ENCODE measurements at regions of chr5 and their contacts with region 1.

Region 1: DNA sequence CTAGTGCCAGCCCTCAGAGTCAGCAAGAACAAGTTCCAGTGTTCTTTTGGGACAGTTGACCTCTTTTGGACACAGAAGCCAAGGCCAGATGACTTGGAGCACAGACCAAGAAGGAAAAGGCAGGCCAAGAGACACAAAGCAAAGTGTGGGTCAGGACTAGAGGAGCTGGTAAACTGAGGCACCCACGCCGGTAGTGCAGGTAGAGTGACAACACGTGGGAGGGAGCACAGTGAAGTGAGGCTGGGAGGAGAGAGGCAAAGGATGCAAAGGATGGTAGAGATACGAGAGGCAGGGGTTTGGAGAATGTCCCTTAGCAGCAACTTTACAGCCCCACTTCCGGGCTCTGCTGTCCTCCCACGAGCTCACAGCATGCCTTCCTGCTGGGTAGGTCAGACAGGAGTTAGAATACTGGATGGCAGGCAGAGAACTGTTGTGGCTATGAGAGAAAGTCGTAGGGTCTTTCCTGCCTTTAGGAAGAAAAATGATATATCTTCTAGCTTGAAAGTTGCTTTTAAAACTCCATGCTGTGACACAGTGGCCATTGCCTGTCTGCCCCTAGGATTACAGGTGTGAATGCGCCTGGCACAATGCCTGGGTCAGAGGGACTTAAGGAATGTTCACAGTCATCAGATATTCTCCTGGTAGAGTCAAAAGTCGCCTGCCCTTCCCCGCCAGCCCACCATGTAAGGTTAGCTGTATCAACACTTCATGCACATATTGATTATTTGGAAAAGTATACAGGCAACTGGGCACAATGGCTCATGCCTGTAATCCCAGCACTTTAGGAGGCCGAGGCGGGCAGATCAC is 97.9 kb downstream of the PDE8B start:
- DNase-seq: no peak
- H3K4me3 ChIP-seq: no peak overlapping the region
- H3K27ac ChIP-seq: no peak overlapping the region
- H3K4me1 ChIP-seq: no peaks in the 10 kb centered on the region
- H3K27me3 ChIP-seq: no peaks in the 10 kb centered on the region
- CTCF ChIP-seq: no peak
- POLR2A ChIP-seq: no peak

Region 2: DNA sequence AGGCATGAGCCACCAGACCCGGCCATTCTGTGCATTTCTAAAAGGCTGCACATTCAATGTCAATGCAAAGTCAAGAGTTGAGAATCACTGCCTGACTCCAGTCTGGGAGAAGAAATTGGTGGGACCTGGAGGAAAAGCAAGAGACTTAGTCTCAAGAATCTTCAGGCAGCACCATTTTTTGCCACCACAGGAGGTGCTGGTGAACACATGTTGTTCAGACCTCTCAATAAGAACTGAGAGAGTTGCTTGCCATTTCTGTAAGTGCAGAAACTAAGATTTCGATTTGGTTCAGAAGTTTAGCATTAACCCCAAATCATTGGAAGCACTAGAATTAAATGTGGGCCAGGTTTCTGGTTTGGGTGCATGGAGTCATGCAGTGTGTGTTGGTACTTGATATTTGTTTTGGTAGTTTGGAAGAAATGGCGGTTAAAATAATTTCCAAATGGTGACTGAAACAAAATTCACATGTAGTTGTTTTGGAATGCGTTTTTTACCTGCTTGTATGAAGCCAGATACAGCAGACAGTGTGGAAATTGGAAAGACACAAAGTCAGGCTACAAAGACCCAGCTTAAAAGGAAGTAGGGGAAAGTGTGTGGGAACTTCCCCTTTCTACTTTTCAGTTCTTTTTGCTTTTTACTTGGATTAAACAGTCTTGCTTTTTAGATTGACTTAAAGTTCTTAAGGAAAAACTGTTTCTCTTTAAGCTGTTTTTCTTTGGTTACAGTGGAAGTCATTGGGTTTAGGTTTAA is 77.5 kb before region 1 on chr5:
- CTCF ChIA-PET with region 1: no interaction called
- POLR2A ChIA-PET with region 1: no interaction called
- dilution Hi-C with region 1: no loop called
- intact Hi-C with region 1: no loop called
- DNase-seq: no peak
- H3K4me3 ChIP-seq: no peak overlapping the region
- H3K27ac ChIP-seq: no peak overlapping the region
- H3K4me1 ChIP-seq: no peaks in the 10 kb centered on the region
- H3K27me3 ChIP-seq: peaks cover 5 to 12% of the 10 kb centered on the region in 2 experiments
- CTCF ChIP-seq: no peak
- POLR2A ChIP-seq: no peak

Region 3: GRCh38 chr5:77379558-77380061 is 71.3 kb after region 1 on chr5:
- CTCF ChIA-PET with region 1: no interaction called
- POLR2A ChIA-PET with region 1: interaction called, 14 read pairs
- dilution Hi-C with region 1: no loop called
- intact Hi-C with region 1: no loop called
- DNase-seq: no peak
- H3K4me3 ChIP-seq: no peak overlapping the region
- H3K27ac ChIP-seq: no peak overlapping the region
- H3K4me1 ChIP-seq: no peaks in the 10 kb centered on the region
- H3K27me3 ChIP-seq: peaks cover 0 to 2% of the 10 kb centered on the region in 2 experiments
- CTCF ChIP-seq: no peak
- POLR2A ChIP-seq: no peak

Measured in endothelial cell of umbilical vein (primary cell).